Sciatic nerve (tissue), 2 donors: ENCODE measurements at regions of chr10 and their contacts with region 1.

Region 1: GRCh38 chr10:86599729-86600128 is 54.6 kb upstream of the OPN4 start:
- DNase-seq: peak; percentile 39
- ATAC-seq: no peak

Region 2: DNA sequence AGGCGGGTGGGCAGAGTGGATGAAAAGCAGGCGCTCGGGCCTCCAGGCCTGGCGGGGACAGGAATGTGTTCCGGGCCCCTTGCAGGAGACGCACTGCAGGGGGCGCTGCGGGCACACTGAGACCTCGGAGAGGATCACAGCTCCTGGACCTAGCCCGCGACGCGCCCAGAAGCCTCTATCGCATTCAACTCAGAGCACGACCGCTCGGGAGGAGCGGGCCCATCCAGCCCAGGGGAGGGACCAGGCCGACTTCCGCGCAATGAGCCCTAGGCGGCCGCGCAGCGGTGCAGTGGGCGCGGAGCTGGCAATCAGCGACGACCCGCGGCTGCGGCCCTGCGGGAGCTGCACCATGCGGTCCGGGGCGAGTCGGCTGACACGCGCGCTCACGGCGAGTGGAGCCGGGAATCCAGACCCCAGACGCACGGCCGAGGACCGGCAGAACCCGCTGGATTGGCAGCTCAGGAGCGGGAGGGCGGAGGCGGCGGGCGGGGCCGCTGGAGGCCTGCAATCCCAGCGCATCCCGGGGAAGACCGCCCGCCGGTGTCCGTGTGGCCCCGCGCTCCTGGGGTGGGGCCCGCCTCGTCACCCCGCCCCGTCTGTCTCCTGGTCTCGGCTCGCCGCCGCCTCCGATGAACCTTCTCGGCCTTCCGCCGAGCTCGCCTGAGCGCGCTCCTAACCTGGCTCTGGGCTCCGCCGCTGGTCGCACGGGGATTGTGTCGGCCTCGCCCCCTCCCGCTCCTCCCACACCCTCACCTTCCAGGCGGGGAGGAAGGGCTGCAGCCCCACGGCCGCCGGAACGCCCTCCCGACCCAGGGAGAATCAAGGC is 199.6 kb before region 1 on chr10:
- intact Hi-C with region 1: loop called (anchors 5 kb)
- DNase-seq: peak; percentile 97
- ATAC-seq: peak; percentile 93